ENCODE measurements at regions of chr10 and their contacts with region 1.

Region 1: GRCh38 chr10:117137031-117137910 is 799 bp downstream of the VAX1 start:
- DNase-seq: peak; percentile 56
- H3K4me3 Mint-ChIP-seq: no peak overlapping the region
- H3K27ac Mint-ChIP-seq: peak overlapping the region; percentile 72
- H3K4me1 Mint-ChIP-seq: peaks cover 8% of the 10 kb centered on the region
- H3K27me3 Mint-ChIP-seq: peaks cover 74% of the 10 kb centered on the region

Region 2: DNA sequence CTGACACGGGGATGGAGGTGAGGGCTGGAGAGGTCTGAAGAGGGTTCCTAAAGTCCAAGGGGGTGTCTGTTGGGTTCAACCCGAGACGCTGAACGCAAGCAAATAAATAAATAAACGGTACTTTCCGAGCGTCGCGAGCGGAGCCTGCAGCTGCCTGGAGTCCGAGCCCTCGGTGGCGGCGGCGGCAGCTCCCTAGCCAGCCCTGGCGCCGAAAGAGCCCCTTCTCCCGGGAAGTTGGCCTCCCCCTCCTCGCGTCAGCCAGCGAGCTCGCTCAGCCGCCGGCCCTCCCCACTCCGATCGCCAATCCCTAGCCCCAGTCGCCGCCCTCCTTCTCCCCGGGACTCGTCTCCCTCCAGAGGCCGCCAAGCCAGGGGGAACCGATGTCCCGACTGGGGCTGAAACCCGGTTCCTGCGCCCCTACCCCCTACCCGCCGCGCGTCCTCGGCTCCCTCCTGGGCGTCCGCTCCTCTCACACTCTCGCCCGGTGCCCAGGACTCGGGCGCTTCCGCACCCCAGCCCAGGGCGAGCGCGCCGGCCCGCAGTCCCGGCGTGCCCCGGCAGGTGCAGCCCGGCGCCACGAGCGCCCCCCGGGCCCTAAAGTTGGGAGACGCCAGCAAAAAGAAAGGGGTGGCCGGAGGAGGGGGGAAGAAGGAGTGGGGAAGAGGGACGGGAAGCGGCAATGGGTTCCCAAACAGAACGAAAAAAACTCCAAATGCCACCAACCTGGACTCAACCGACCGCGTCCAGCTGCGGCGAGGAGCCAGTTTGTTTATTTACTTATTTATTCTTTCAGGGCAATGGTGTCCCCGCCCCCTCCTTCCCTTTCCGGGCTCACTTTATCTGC is 864.6 kb before region 1 on chr10 and contains the start of gene GFRA1:
- intact Hi-C with region 1: loop called (anchors 10 kb)
- DNase-seq: no peak
- H3K4me3 Mint-ChIP-seq: peak within 1 kb of the TSS; percentile 39
- H3K27ac Mint-ChIP-seq: no peak within 1 kb of the TSS
- H3K4me1 Mint-ChIP-seq: peaks cover 3% of the 10 kb centered on the region
- H3K27me3 Mint-ChIP-seq: peaks cover 65% of the 10 kb centered on the region
- total RNA-seq, gene GFRA1: not detected in 2 replicates